PC-9 (cell line): ENCODE measurements at regions of chr9 and their contacts with region 1.

Region 1: GRCh38 chr9:85741875-85742629 is at the start of gene AGTPBP1:
- DNase-seq: peak; percentile 75 to 97
- H3K4me3 ChIP-seq: peak within 1 kb of the TSS; percentile 92
- H3K27ac ChIP-seq: peak within 1 kb of the TSS; percentile 53
- H3K4me1 ChIP-seq: peaks cover 31% of the 10 kb centered on the region
- H3K27me3 ChIP-seq: peaks cover 28% of the 10 kb centered on the region
- CTCF ChIP-seq: no peak
- total RNA-seq, gene AGTPBP1: 15.7 and 19.8 TPM in 2 replicates

Region 2: DNA sequence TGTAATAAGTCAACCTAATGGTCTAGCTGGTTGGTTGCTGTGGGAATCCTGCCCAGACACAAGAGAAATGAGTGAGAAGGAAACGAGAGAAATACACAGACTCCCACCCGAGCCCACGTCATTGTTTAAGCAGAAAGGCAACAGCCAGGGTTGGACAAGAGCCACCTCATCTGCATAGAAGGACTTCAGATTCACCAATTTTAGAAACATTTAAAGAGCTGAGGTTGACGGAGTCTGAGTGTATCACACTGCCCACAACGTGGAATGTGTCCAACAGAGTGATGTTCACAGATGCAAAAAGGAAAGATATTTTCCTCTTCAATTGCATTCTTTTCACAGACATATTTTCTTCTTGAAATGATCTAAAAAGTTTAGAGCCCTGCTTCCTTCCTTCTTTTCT is 349.8 kb before region 1 on chr9:
- CTCF ChIA-PET with region 1: no interaction called
- POLR2A ChIA-PET with region 1: no interaction called
- intact Hi-C with region 1: no loop called
- DNase-seq: no peak
- H3K4me3 ChIP-seq: no peak overlapping the region
- H3K27ac ChIP-seq: no peak overlapping the region
- H3K4me1 ChIP-seq: no peaks in the 10 kb centered on the region
- H3K27me3 ChIP-seq: peaks cover 9% of the 10 kb centered on the region
- CTCF ChIP-seq: no peak

Region 3: DNA sequence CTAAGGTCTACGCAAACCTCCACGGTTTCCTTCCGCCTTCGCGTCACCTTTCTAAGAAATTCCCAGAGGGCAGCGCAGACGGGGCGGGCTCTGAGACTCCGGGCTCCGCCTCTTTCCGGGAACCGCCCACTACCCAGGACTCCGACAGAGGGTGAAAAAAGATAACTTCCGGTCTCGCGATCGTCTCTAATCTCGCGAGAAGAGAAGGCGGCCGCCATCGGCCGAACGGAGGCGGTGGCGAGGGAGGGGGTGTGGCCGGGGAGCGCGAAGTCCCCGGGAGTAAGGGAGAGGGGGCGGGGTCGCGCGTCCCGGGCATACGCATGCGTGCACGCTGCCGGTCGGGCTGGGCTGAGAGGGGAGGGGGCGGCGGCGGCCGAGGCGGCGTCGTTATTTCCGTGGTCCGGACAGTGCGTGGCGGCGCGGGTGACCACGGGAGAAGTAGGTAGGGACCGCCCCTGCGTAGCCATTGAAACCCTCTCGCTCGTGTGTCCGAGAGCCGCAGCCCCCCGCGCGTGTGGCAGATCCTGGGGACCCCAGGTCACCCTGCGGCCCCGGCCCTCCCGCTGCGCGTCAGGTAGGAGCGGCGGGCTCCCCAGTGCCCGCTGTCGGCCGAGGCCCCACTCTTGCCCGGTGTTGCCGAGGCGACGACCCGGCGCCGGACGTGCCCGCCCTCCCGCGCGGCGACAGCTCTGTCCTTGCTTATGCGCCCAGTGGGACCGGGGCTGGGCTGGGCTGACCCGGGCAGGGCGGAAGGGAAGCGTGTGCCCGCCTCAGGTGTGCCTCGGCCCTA is 199.0 kb after region 1 on chr9 and contains the start of gene NAA35:
- CTCF ChIA-PET with region 1: no interaction called
- POLR2A ChIA-PET with region 1: no interaction called
- intact Hi-C with region 1: loop called (anchors 5 kb)
- DNase-seq: peak; percentile 91 to 100
- H3K4me3 ChIP-seq: peak within 1 kb of the TSS; percentile 99
- H3K27ac ChIP-seq: peak within 1 kb of the TSS; percentile 77
- H3K4me1 ChIP-seq: peaks cover 12% of the 10 kb centered on the region
- H3K27me3 ChIP-seq: no peaks in the 10 kb centered on the region
- CTCF ChIP-seq: no peak
- total RNA-seq, gene NAA35: 33.3 and 33.6 TPM in 2 replicates

Region 4: GRCh38 chr9:86766912-86767311 is 1024.9 kb after region 1 on chr9:
- CTCF ChIA-PET with region 1: no interaction called
- POLR2A ChIA-PET with region 1: interaction called, 11 read pairs
- intact Hi-C with region 1: no loop called
- DNase-seq: peak; percentile 76 to 95
- H3K4me3 ChIP-seq: no peak overlapping the region; the same call in 1 of the 2 replicates
- H3K27ac ChIP-seq: peak overlapping the region; percentile 82
- H3K4me1 ChIP-seq: peaks cover 25% of the 10 kb centered on the region
- H3K27me3 ChIP-seq: no peaks in the 10 kb centered on the region
- CTCF ChIP-seq: no peak